Motor neuron (in vitro differentiated cells): ENCODE measurements at regions of chr6 and their contacts with region 1.

Region 1: DNA sequence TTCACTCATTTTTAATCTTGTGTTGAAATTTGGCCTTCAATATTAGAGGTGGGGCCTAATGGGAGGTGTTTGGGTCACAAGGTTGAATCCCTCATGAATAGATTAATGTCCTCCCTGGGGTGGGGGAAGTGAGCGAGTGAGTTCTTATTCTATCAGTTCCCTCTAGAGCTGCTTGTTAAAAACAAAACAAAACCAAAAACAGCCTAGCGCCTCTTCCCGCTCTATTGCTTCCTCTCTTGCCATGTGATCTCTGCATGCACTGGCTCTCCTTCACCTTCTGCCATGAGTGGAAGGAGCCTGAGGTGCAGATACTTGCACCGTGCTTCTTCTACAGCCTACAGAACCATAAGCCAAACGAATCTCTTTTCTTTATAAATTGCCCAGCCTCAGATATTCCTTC is 89.6 kb upstream of the SLC35F1 start:
- ATAC-seq: no peak
- H3K4me3 ChIP-seq: no peak overlapping the region
- H3K27ac ChIP-seq: no peak overlapping the region
- H3K4me1 ChIP-seq: no peaks in the 10 kb centered on the region

Region 2: GRCh38 chr6:116797585-116797984 is 1019.9 kb before region 1 on chr6:
- in situ Hi-C with region 1: no loop called
- ATAC-seq: no peak
- H3K4me3 ChIP-seq: no peak overlapping the region
- H3K27ac ChIP-seq: no peak overlapping the region
- H3K4me1 ChIP-seq: no peaks in the 10 kb centered on the region

Region 3: DNA sequence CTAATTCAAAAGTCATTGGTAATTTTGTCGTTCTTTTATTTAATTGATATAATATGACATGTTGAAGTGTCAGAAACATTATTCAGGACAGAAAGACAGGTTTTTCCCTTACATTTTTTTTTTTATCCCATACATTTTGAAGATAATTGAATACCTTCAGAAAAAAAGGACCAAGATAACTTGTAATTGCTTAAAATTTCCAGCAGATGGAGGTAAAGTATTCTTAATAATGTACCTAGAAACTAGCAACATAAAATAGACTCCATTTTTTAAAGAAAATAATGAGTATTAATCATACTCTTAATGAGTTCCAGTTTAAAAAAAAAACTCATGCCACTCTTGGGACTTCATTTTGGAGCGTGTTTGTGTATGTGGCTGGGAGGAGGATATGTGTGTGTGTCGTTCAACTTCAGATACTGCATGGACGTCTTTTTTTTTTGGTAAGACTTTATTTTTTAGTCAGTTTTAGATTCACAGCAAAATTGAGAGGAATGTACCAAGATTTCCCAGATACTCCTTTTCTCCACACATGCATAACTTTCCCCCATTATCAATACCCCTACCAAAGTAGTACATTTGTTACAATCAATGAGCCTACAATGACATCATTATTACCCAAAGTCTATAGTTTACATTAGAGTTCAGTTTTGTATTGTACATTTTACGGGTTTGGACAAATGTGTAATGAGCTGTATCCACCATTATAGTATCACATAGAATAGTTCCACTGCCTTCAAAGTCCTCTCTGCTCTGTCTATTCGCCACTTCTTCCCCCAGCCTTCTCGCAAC is 471.2 kb before region 1 on chr6:
- in situ Hi-C with region 1: loop called in 1 of 9 experiments (anchors 25 kb)
- ATAC-seq: no peak
- H3K4me3 ChIP-seq: no peak overlapping the region
- H3K27ac ChIP-seq: no peak overlapping the region
- H3K4me1 ChIP-seq: no peaks in the 10 kb centered on the region

Region 4: GRCh38 chr6:117449549-117450439 is 367.7 kb before region 1 on chr6:
- in situ Hi-C with region 1: loop called in 1 of 9 experiments (anchors 25 kb)
- ATAC-seq: peak in 3 of 8 experiments; percentile 22 to 43 (median 35)
- H3K4me3 ChIP-seq: no peak overlapping the region
- H3K27ac ChIP-seq: no peak overlapping the region
- H3K4me1 ChIP-seq: peaks cover 0 to 5% of the 10 kb centered on the region in 2 donors

Region 5: GRCh38 chr6:118097576-118097975 is 280.1 kb after region 1 on chr6:
- in situ Hi-C with region 1: no loop called
- ATAC-seq: no peak
- H3K4me3 ChIP-seq: no peak overlapping the region
- H3K27ac ChIP-seq: no peak overlapping the region
- H3K4me1 ChIP-seq: peaks cover 23 to 26% of the 10 kb centered on the region in 2 donors